Common myeloid progenitor, CD34-positive (primary cell): ENCODE measurements at regions of chr7 and their contacts with region 1.

Region 1: DNA sequence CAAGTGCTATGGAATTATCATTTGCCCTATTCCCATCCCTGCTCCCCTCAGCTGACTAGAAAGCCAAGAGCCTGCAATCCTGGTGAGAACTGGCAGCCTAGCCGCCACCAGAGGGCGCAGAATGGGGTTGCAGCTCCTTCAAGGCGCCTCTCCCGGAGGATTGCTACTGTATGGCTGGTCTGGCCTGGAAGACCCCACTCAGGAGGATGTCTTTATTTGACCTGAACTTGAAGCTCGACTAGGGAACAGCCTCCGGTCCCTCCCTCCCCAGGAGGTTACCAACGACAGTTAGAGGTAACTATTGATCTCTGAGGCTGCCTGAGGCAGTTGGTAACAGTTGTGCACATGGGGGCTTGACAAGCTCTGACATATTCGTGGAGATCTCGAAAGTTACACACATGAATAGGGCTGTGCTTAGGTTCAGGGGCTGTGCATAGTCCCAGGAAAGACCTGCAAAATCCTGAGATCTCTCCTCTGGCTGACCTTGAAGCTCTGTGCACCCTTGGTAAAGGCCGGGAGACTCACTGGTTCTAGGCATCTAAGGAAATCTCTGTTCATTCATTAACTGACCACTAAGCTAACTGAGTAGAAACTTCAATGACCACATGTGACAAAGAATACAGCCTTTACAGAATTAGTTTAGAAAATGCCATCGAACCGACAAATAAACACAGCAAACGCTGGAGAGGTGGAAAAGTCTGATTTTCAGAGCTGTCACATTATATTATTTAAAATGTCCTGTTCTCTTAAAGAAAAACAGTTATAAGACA is 65.7 kb downstream of the TSPAN12 start:
- DNase-seq: peak; percentile 65 to 76 (median 70)
- H3K4me3 ChIP-seq: no peak overlapping the region
- H3K27ac ChIP-seq: no peak overlapping the region
- H3K4me1 ChIP-seq: no peaks in the 10 kb centered on the region
- H3K27me3 ChIP-seq: no peaks in the 10 kb centered on the region

Region 2: GRCh38 chr7:120502132-120502531 is 290.1 kb before region 1 on chr7:
- CTCF ChIA-PET with region 1: no interaction called
- POLR2A ChIA-PET with region 1: no interaction called
- DNase-seq: no peak
- H3K4me3 ChIP-seq: no peak overlapping the region
- H3K27ac ChIP-seq: no peak overlapping the region
- H3K4me1 ChIP-seq: no peaks in the 10 kb centered on the region
- H3K27me3 ChIP-seq: peaks cover 0 to 2% (median 0%) of the 10 kb centered on the region in 5 experiments

Region 3: DNA sequence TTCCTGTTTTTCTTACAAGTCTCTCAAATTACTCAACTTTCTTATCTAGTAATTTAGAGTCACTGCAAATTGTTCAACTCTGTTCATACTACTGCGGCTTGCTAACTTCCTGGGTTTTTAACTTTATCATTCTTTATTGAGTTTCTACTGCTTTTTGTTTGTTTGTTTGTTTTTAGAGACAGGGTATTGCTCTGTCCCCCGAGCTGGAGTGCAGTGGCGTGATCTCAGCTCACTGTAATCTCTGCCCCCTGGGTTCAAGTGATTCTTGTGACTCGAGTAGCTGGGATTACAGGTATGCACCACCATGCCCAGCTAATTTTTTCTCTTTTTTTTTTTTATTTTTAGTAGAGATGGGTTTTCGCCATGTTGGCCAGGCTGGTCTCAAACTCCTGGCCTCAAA is 117.2 kb before region 1 on chr7:
- CTCF ChIA-PET with region 1: no interaction called
- POLR2A ChIA-PET with region 1: no interaction called
- DNase-seq: no peak
- H3K4me3 ChIP-seq: no peak overlapping the region
- H3K27ac ChIP-seq: no peak overlapping the region
- H3K4me1 ChIP-seq: no peaks in the 10 kb centered on the region
- H3K27me3 ChIP-seq: peaks cover 5 to 66% (median 6%) of the 10 kb centered on the region in 5 experiments

Region 4: GRCh38 chr7:120805636-120806388 is 13.5 kb after region 1 on chr7:
- CTCF ChIA-PET with region 1: interaction called, 27 read pairs
- POLR2A ChIA-PET with region 1: no interaction called
- DNase-seq: peak; percentile 75 to 85 (median 78)
- H3K4me3 ChIP-seq: peak overlapping the region in 1 of 7 experiments; percentile 14
- H3K27ac ChIP-seq: no peak overlapping the region
- H3K4me1 ChIP-seq: no peaks in the 10 kb centered on the region
- H3K27me3 ChIP-seq: no peaks in the 10 kb centered on the region

Region 5: GRCh38 chr7:121081327-121081936 is 289.2 kb after region 1 on chr7:
- CTCF ChIA-PET with region 1: interaction called, 19 read pairs
- POLR2A ChIA-PET with region 1: no interaction called
- DNase-seq: peak; percentile 56 to 82 (median 77)
- H3K4me3 ChIP-seq: no peak overlapping the region
- H3K27ac ChIP-seq: no peak overlapping the region
- H3K4me1 ChIP-seq: peaks cover 0 to 8% (median 0%) of the 10 kb centered on the region in 4 experiments
- H3K27me3 ChIP-seq: no peaks in the 10 kb centered on the region

Region 6: GRCh38 chr7:121107923-121108498 is 315.7 kb after region 1 on chr7:
- CTCF ChIA-PET with region 1: interaction called, 19 read pairs
- POLR2A ChIA-PET with region 1: no interaction called
- DNase-seq: peak; percentile 59 to 80 (median 73)
- H3K4me3 ChIP-seq: no peak overlapping the region
- H3K27ac ChIP-seq: no peak overlapping the region
- H3K4me1 ChIP-seq: no peaks in the 10 kb centered on the region
- H3K27me3 ChIP-seq: no peaks in the 10 kb centered on the region